ENCODE measurements at regions of chr19 and their contacts with region 1.

Region 1: GRCh38 chr19:51660975-51661600 is 14.5 kb upstream of the SIGLEC14 start:
- DNase-seq: peak; percentile 61
- H3K4me3 ChIP-seq: no peak overlapping the region; a peak in 1 of 4 replicates
- H3K27ac ChIP-seq: no peak overlapping the region
- H3K4me1 ChIP-seq: no peaks in the 10 kb centered on the region
- H3K27me3 ChIP-seq: peaks cover 8% of the 10 kb centered on the region; the same call in 1 of the 2 replicates
- CTCF ChIP-seq: peak; percentile 66
- EP300 ChIP-seq: no peak
- RAD21 ChIP-seq: peak; percentile 76

Region 2: DNA sequence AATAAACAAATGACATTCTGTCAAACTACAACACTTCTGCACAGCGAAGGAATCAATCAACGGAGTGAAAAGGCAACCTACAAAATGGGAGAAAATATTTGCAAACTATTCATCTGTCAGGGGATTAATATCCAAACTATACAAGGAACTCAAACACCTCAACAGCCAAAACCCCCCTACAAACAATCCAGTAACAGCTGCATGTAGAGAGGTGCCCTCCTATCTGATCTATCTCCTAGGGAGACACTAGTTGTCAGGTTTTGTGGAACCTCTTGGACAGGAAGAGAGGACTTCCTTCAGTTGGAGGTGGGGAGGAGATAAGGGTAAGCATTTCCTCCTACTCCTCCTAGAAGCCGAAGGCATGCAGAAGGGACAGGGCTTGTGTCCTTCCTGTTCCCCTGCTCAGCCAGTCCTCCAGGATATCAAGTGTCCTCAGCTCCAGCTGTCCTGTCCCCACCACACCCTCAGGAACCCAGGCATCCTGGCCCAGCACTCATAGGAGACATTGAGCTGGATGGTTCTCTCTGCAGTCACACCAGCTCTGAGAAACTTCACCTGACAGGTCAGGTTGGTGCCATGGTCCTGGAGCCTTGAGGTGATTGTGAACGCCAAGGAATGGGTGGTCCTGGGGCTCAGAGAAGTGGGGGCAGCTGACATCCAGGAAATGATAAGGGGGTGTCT is 193.1 kb before region 1 on chr19:
- CTCF ChIA-PET with region 1: interaction called, 137 read pairs
- POLR2A ChIA-PET with region 1: no interaction called
- DNase-seq: no peak
- H3K4me3 ChIP-seq: no peak overlapping the region
- H3K27ac ChIP-seq: no peak overlapping the region
- H3K4me1 ChIP-seq: no peaks in the 10 kb centered on the region
- H3K27me3 ChIP-seq: peaks cover 15% of the 10 kb centered on the region; the same call in 1 of the 2 replicates
- CTCF ChIP-seq: no peak
- EP300 ChIP-seq: no peak
- RAD21 ChIP-seq: no peak

Region 3: GRCh38 chr19:51480590-51480989 is 180.5 kb before region 1 on chr19:
- CTCF ChIA-PET with region 1: interaction called, 137 read pairs
- POLR2A ChIA-PET with region 1: no interaction called
- DNase-seq: no peak
- H3K4me3 ChIP-seq: no peak overlapping the region
- H3K27ac ChIP-seq: no peak overlapping the region
- H3K4me1 ChIP-seq: no peaks in the 10 kb centered on the region
- H3K27me3 ChIP-seq: peaks cover 16% of the 10 kb centered on the region; the same call in 1 of the 2 replicates
- CTCF ChIP-seq: no peak
- EP300 ChIP-seq: no peak
- RAD21 ChIP-seq: no peak

Region 4: DNA sequence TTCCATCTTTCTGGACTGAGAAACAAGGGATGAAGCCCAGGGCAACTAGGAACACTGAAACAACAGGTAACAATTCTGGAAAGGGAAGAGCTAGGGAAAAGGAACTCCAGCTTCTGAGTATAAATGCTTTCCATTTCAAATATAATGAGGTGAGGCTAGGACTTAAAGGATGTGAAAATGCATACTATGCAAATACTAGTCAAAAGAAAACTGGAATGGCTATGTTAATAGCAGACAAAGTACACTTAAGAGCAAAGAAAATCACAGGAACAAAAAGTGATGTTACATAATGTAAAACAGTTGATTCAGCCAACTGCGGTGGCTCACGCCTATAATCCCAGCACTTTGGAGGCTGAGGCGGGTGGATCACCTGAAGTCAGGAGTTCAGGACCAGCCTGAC is 20.7 kb before region 1 on chr19:
- CTCF ChIA-PET with region 1: interaction called, 17 read pairs
- POLR2A ChIA-PET with region 1: no interaction called
- DNase-seq: no peak
- H3K4me3 ChIP-seq: no peak overlapping the region
- H3K27ac ChIP-seq: no peak overlapping the region
- H3K4me1 ChIP-seq: no peaks in the 10 kb centered on the region
- H3K27me3 ChIP-seq: peaks cover 28% of the 10 kb centered on the region; the same call in 1 of the 2 replicates
- CTCF ChIP-seq: no peak
- EP300 ChIP-seq: no peak
- RAD21 ChIP-seq: no peak

Region 5: DNA sequence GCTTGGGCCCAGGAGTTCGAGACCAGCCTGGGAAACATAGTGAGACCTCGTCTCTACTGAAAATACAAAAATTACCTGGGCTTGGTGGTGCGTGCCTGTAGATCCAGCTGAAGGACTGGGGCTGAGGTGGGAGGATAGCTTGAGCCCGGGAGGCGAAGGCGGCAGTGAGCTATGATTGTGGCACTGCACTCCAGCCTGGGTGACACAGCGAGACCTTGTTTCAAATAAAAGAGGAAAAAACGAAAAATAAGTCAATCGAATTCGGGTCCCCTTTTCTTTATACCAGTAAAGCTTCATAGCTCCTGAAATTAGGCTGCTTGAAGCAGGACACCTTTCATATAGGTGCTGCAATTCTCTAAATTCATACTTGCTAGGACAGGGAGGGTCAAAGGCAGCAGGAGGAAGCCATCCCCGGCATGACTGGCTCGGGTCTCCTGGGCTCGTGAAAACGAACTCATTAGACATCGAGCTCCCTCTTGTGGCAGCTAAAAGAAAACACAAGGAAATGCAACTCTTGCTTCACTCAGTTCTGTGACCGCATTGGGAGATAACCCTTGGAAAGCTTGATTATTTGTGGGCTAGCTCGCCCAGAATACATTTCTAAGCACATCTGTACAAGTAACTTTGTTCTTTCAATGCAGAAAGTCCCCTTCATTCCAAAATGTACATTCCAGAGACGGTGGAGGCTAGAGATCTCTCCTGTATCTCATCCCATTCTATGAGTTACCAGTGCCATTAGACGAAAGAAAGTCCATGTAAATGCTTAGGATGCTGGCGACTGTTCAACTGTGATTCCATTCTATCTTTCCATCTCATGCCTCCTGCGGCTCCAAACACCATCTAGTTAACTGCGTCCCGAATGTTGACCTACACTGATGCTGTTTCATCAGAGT is 116.7 kb after region 1 on chr19:
- CTCF ChIA-PET with region 1: interaction called, 12 read pairs
- POLR2A ChIA-PET with region 1: no interaction called
- DNase-seq: peak; percentile 66
- H3K4me3 ChIP-seq: peak overlapping the region in 1 of 2 experiments; percentile 10; a peak in 1 of 4 replicates
- H3K27ac ChIP-seq: no peak overlapping the region
- H3K4me1 ChIP-seq: no peaks in the 10 kb centered on the region
- H3K27me3 ChIP-seq: no peaks in the 10 kb centered on the region
- CTCF ChIP-seq: peak; percentile 81
- EP300 ChIP-seq: no peak
- RAD21 ChIP-seq: peak; percentile 78

Region 6: GRCh38 chr19:51815043-51815442 is 154.0 kb after region 1 on chr19:
- CTCF ChIA-PET with region 1: no interaction called
- POLR2A ChIA-PET with region 1: no interaction called
- DNase-seq: no peak
- H3K4me3 ChIP-seq: no peak overlapping the region
- H3K27ac ChIP-seq: no peak overlapping the region
- H3K4me1 ChIP-seq: peaks cover 0 to under 1% of the 10 kb centered on the region in 2 experiments; a peak in 1 of 4 replicates
- H3K27me3 ChIP-seq: no peaks in the 10 kb centered on the region; the same call in 1 of the 2 replicates
- CTCF ChIP-seq: no peak
- EP300 ChIP-seq: no peak
- RAD21 ChIP-seq: no peak